ENCODE measurements at regions of chrX and their contacts with region 1.

Region 1: DNA sequence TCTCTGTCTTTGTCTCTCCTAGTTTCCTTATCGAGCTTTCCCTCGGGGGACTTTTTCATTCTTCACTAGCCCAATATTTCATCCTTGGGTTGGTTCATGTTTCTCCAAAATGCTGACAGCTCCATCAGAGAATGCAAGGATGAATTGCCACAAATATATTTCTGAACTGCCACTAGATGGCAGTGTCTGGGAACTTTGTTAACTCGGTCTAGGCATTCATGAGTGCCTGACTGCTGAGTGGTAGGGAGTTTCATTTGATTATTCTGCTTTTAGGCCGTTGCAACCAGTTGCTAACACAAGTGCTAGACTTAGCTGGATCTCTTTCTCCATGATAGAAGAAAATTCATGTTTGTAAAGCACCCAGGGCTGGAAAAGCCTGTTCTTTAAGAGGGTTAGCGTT is 73.5 kb upstream of the RAP2C start:
- DNase-seq: peak in 1 of 10 donors; percentile 14
- H3K4me3 ChIP-seq: peak overlapping the region in 1 of 59 donors; percentile 21
- H3K27ac ChIP-seq: no peak overlapping the region
- H3K27me3 ChIP-seq: peaks cover 0 to 58% (median 12%) of the 10 kb centered on the region in 45 donors
- CTCF ChIP-seq: peak in 55 of 56 donors; percentile 45 to 88 (median 72)

Region 2: DNA sequence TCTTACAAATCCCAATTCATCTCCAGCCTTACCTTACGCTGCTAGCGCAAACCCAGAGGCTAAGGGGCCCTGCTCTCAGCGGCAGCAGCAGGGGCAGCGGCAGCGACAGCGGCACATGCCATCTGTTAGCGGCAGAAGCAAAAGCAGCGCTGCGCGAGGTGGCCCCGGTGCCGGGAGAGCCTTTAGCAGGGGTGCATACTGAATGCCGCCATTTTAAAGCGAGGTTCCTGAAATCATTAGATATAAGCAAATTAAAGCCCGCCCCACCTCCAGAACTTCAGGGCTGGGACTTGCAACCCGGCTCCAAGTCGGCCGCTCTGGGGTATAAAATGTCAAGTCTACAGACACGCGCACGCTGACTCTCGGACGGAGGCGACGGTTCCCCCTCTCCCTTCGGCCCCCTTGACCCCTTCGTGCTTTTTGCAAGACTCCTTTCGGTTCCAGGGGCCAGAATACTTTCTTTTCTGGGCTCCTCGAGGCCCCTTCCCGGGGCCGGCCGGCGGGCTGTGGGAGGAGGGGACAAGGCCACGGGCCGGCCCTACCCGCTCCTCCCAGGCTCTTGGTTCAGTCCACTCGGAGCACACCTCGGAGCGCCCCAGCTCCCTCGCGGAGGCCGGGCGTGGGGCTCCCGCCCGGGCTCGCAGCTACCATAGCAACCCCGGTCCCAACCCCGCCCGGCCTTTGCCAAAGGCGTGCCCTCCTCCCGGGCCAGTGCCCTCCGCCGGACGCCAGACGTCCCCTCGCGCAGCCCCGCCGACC is 196.2 kb after region 1 on chrX and contains the start of gene MBNL3:
- intact Hi-C with region 1: loop called in 1 of 2 experiments (anchors 10 kb)
- DNase-seq: peak in 7 of 10 donors; percentile 25 to 50 (median 41)
- H3K4me3 ChIP-seq: peak within 1 kb of the TSS; percentile 31 to 75 (median 57)
- H3K27ac ChIP-seq: peak within 1 kb of the TSS in 48 of 59 donors; percentile 5 to 76 (median 55)
- H3K27me3 ChIP-seq: peaks cover 0 to 90% (median 32%) of the 10 kb centered on the region in 45 donors
- CTCF ChIP-seq: no peak
- total RNA-seq, gene MBNL3: 1.5 to 10.1 (median 4.2) TPM

Region 3: DNA sequence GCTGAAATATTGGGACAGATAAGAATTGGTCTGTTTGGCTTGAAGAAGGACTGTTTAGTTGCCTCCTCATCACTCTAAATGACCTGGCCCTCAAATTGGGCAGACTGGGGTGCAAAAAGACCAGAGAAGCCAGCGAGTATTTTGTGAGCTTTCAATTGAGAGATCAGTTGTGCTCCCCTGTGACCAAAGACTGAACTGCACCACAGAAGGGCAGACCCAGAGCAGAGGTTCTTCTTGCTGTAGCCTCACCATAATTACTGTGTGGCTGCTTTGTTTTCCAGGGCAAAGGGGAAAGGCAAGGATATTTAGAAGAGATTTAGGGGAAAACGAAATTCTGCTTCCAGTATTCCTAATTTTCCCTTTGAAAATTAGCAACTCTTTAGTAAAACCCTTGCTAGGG is 300.1 kb after region 1 on chrX:
- intact Hi-C with region 1: loop called (anchors 5 to 10 kb)
- DNase-seq: no peak
- H3K4me3 ChIP-seq: no peak overlapping the region
- H3K27ac ChIP-seq: no peak overlapping the region
- H3K27me3 ChIP-seq: peaks cover 0 to 90% (median 31%) of the 10 kb centered on the region in 45 donors
- CTCF ChIP-seq: peak in 45 of 56 donors; percentile 13 to 64 (median 38)

Region 4: DNA sequence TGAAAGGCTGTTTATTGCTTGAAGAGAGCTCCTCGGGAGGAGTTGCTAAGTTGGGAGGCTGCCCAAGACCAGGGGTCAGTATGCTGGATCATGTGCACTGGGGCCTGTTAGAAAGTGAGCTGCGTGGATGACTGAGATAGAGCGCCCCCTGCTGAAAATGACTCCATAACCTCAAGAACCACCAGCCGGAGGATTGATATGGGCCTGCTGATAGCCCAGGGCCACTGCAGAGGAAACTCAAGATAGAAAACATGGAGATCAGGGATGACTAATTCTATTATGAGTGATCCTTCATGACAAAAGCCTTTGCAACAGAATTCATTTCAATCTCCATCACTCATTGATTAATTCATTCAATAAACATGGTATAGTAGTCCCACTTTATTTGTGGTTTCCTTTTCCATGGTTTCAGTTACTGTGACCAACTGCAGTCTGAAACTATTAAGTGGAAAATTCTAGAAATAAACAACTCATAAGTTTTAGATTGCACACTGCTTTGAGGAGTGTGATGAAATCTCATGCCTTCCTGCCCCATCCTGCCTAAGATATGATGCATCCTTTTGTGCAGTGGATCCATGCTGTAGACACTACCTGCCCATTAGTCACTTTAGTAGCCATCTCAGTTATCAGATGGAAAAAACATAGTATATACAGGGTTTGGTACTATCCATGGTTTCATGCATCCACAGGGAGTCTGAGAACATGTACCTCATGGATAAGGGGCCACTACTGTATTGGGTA is 322.8 kb after region 1 on chrX:
- intact Hi-C with region 1: loop called in 1 of 2 experiments (anchors 5 kb)
- DNase-seq: peak in 3 of 10 donors; percentile 18 to 43 (median 39)
- H3K4me3 ChIP-seq: no peak overlapping the region
- H3K27ac ChIP-seq: no peak overlapping the region
- H3K27me3 ChIP-seq: peaks cover 0 to 86% (median 19%) of the 10 kb centered on the region in 45 donors
- CTCF ChIP-seq: peak in 52 of 56 donors; percentile 20 to 68 (median 47)

Region 5: GRCh38 chrX:133511041-133511440 is 1218.2 kb after region 1 on chrX:
- intact Hi-C with region 1: no loop called
- DNase-seq: no peak
- H3K4me3 ChIP-seq: no peak overlapping the region
- H3K27ac ChIP-seq: no peak overlapping the region
- H3K27me3 ChIP-seq: peaks cover 0 to 64% (median 15%) of the 10 kb centered on the region in 45 donors
- CTCF ChIP-seq: no peak

Measured in dorsolateral prefrontal cortex (tissue), 120 donors.